ENCODE measurements at regions of chr16 and their contacts with region 1.

Region 1: DNA sequence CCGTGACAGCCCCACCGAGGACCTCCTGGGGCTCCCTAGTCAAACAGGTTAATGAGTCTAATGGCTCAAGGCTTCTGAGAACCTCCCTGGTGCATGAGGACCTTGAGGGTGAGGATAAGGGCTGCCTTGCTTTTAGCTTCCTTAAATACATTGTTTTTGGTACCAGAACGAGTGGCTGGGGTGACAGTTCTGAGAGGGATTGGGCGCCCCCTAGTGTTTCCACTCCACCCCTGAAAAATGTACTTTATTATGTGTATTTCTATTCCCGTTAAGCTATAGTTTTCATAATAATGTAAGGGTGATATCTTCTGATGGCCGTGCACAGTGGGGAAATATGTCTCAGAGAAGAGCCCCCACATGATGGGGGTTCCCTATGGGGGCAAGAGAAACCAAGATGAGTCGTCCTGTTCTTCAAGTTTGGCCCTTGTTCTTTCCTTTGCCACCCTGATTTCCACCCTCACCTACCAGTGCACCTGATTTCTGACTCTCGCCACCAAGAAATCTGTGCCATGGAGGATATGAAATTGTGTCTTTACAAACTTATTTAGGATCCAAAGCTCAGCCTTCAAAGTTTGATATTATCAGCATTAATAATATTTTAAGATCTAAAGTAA is 14.5 kb upstream of the VWA3A start:
- DNase-seq: peak; percentile 28 to 72 (median 65)
- H3K4me3 ChIP-seq: no peak overlapping the region
- H3K27ac ChIP-seq: no peak overlapping the region
- H3K4me1 ChIP-seq: peaks cover 3% of the 10 kb centered on the region
- H3K27me3 ChIP-seq: no peaks in the 10 kb centered on the region
- CTCF ChIP-seq: peak; percentile 54 to 61 (median 56)
- EP300 ChIP-seq: no peak
- POLR2A ChIP-seq: no peak

Region 2: GRCh38 chr16:22001591-22001990 is 76.2 kb before region 1 on chr16:
- intact Hi-C with region 1: loop called in 3 of 4 experiments (anchors 2 to 10 kb)
- DNase-seq: no peak
- H3K4me3 ChIP-seq: no peak overlapping the region
- H3K27ac ChIP-seq: no peak overlapping the region
- H3K4me1 ChIP-seq: peaks cover 1% of the 10 kb centered on the region
- H3K27me3 ChIP-seq: no peaks in the 10 kb centered on the region
- CTCF ChIP-seq: no peak
- EP300 ChIP-seq: no peak
- POLR2A ChIP-seq: no peak

Region 3: GRCh38 chr16:22007509-22008214 is 70.1 kb before region 1 on chr16 and contains the start of gene MOSMO:
- intact Hi-C with region 1: loop called in 2 of 4 experiments (anchors 5 to 10 kb)
- DNase-seq: peak; percentile 66 to 85 (median 76)
- H3K4me3 ChIP-seq: peak within 1 kb of the TSS; percentile 57
- H3K27ac ChIP-seq: peak within 1 kb of the TSS in 1 of 2 donors; percentile 57
- H3K4me1 ChIP-seq: peaks cover 7% of the 10 kb centered on the region
- H3K27me3 ChIP-seq: no peaks in the 10 kb centered on the region
- CTCF ChIP-seq: peak in 2 of 3 donors; percentile 15 to 31
- EP300 ChIP-seq: no peak
- POLR2A ChIP-seq: peak; percentile 33
- total RNA-seq, gene MOSMO: 14.3 to 33.3 (median 20.7) TPM

Region 4: GRCh38 chr16:22353191-22353919 is 275.5 kb after region 1 on chr16:
- intact Hi-C with region 1: no loop called
- DNase-seq: no peak
- H3K4me3 ChIP-seq: no peak overlapping the region
- H3K27ac ChIP-seq: no peak overlapping the region
- H3K4me1 ChIP-seq: peaks cover 6% of the 10 kb centered on the region
- H3K27me3 ChIP-seq: no peaks in the 10 kb centered on the region
- CTCF ChIP-seq: no peak
- EP300 ChIP-seq: no peak
- POLR2A ChIP-seq: no peak

Measured in ovary (tissue), 10 donors.